ENCODE measurements at regions of chr17 and their contacts with region 1.

Region 1: GRCh38 chr17:40303009-40303657 is 5.8 kb upstream of the RARA start:
- DNase-seq: peak in 1 of 2 donors; percentile 19
- ATAC-seq: peak; percentile 83 to 89 (median 86)
- H3K4me3 ChIP-seq: no peak overlapping the region
- H3K27ac ChIP-seq: peak overlapping the region; percentile 82
- H3K4me1 ChIP-seq: peaks cover 41% of the 10 kb centered on the region
- H3K27me3 ChIP-seq: no peaks in the 10 kb centered on the region
- CTCF ChIP-seq: peak; percentile 78

Region 2: GRCh38 chr17:40355123-40355803 is 52.1 kb after region 1 on chr17:
- intact Hi-C with region 1: loop called (anchors 1 to 2 kb)
- DNase-seq: peak; percentile 82 to 91
- ATAC-seq: peak; percentile 74 to 83 (median 78)
- H3K4me3 ChIP-seq: no peak overlapping the region
- H3K27ac ChIP-seq: peak overlapping the region; percentile 30
- H3K4me1 ChIP-seq: peaks cover 14% of the 10 kb centered on the region
- H3K27me3 ChIP-seq: no peaks in the 10 kb centered on the region
- CTCF ChIP-seq: peak; percentile 99

Region 3: GRCh38 chr17:40410082-40410481 is 106.9 kb after region 1 on chr17:
- intact Hi-C with region 1: loop called in 1 of 2 experiments (anchors 2 kb)
- DNase-seq: no peak
- ATAC-seq: no peak
- H3K4me3 ChIP-seq: no peak overlapping the region
- H3K27ac ChIP-seq: no peak overlapping the region
- H3K4me1 ChIP-seq: no peaks in the 10 kb centered on the region
- H3K27me3 ChIP-seq: no peaks in the 10 kb centered on the region
- CTCF ChIP-seq: no peak

Region 4: GRCh38 chr17:40417609-40418427 is 114.7 kb after region 1 on chr17 and contains the start of gene TOP2A:
- intact Hi-C with region 1: loop called in 1 of 2 experiments (anchors 2 kb)
- DNase-seq: peak; percentile 89 to 93
- ATAC-seq: peak; percentile 100
- H3K4me3 ChIP-seq: peak within 1 kb of the TSS; percentile 69
- H3K27ac ChIP-seq: peak within 1 kb of the TSS; percentile 14
- H3K4me1 ChIP-seq: peaks cover 5% of the 10 kb centered on the region
- H3K27me3 ChIP-seq: peaks cover 0 to 6% (median 0%) of the 10 kb centered on the region in 3 donors
- CTCF ChIP-seq: no peak
- total RNA-seq, gene TOP2A: 0.15 to 0.84 (median 0.46) TPM

Region 5: DNA sequence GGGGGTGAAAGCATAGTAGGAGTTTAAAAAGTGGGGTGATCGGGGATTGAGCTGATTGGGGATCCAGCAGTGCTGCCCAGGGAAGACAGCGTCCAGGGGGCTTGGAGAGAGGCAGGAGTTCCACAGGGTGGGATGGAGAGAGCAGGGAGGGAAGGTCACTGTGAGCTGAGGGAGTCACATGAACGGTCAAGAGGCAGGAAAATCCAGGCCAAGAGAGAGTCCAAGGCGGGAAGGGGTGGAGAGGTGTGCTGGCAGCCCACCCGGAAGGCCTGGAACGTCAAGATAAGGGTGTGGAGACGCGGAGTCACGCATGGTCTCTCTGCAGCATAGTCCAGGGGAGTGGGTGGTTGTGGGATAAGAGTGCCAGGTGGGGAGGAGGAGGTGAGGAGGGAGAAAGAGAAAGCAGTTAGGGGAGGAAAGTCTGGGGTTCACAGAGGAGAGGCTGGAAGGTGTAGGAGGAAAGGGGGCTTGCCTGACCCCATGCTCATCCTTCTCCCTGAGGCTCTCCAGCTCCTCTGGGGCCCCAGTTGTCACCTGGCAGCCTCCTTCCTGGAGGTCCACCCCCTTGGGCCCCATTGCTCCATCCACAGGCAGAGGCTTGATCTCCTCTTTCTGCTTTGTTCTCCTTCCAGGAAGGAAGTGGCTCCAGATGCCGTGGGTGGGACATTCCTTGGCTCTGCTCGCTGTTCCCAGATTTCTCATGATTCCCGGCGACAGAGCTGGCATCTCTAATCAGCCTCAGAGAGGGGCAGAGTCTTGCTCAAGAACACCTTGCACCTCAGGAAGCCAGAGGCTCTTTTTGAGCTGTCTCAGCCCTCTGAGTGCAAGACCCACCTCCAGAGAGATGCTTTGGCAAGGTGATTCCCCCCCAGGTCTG is 233.4 kb after region 1 on chr17:
- intact Hi-C with region 1: loop called in 1 of 2 experiments (anchors 10 kb)
- DNase-seq: peak; percentile 64 to 69
- ATAC-seq: peak in 1 of 4 donors; percentile 23
- H3K4me3 ChIP-seq: no peak overlapping the region
- H3K27ac ChIP-seq: peak overlapping the region; percentile 68
- H3K4me1 ChIP-seq: peaks cover 42% of the 10 kb centered on the region
- H3K27me3 ChIP-seq: no peaks in the 10 kb centered on the region
- CTCF ChIP-seq: no peak

Measured in psoas muscle (tissue), 8 donors.